Lower leg skin (tissue), 4 donors: ENCODE measurements at regions of chr12 and their contacts with region 1.

Region 1: GRCh38 chr12:103986829-103987228 is 21.2 kb downstream of the TDG start:
- DNase-seq: no peak
- H3K4me3 ChIP-seq: no peak overlapping the region
- CTCF ChIP-seq: no peak
- POLR2A ChIP-seq: no peak

Region 2: GRCh38 chr12:104108755-104109445 is 122.1 kb after region 1 on chr12:
- intact Hi-C with region 1: loop called (anchors 5 kb)
- DNase-seq: peak; percentile 78 to 97
- H3K4me3 ChIP-seq: no peak overlapping the region
- CTCF ChIP-seq: peak in 1 of 3 donors; percentile 46
- POLR2A ChIP-seq: no peak